Sigmoid colon (tissue), 7 donors: ENCODE measurements at regions of chr18 and their contacts with region 1.

Region 1: DNA sequence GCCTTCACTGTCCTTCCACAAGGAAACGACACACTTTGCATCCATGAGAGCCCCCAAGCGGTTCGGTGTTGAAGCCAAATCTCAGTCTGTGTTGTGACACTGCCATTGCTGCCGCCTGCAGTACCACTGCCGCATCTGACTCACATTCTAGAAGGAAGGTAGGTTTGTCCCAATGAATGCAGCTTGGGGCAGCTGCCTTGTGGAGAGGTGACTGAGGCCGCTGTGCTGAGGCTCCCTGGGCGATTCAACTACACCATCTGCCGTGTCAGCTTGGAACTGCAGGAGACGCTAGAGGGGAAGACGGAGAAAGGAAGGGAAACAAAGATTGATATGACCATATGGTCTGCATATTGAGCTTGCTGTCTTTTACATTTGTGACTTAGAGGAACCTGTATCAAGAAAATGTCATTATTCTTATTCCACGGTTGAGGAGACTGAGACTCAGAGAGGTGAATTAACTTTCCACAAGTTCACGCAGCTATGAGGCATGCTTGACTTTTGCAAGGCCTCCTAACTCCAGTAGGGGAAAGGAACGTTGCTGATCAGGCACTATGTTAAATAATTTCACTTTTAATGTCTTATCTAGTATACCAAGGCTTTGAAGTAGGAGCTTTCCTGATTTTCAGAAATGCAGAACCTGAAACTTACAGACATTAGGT is 43.5 kb upstream of the LMAN1 start:
- DNase-seq: peak; percentile 77
- H3K4me3 ChIP-seq: no peak overlapping the region
- H3K27ac ChIP-seq: no peak overlapping the region
- H3K4me1 ChIP-seq: no peaks in the 10 kb centered on the region
- H3K27me3 ChIP-seq: no peaks in the 10 kb centered on the region
- CTCF ChIP-seq: peak; percentile 55 to 82 (median 71)
- EP300 ChIP-seq: no peak
- POLR2A ChIP-seq: no peak

Region 2: DNA sequence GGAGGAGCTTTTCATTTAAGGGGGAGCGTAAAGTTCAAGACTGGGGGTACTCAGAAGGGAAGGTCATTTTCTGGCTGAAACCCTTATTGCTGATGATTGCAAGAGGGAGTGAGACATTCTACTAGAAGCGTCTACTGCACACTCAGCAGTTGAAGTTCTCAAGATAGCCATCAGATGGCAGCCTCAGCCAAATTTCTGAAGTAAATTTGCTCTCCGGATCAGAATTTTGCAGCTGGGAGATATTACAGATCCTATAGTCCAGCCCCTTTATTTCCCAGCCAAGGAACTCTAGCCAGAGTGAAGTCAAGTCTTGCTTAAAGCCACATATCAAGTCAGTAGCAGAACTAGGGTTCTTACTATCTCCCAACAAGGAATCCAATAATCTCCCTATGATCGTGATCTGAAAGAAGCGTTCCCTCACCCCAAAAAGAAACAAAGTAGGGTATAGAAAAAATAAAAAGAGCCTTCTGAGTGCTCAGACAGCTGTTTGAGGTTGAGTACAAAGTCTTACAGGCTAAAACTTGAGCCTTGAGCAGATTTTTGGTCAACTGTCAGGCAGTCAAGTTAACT is 153.3 kb before region 1 on chr18:
- intact Hi-C with region 1: loop called (anchors 5 kb)
- DNase-seq: no peak
- H3K4me3 ChIP-seq: no peak overlapping the region
- H3K27ac ChIP-seq: no peak overlapping the region
- H3K4me1 ChIP-seq: peaks cover 0 to 3% (median 0%) of the 10 kb centered on the region in 4 donors
- H3K27me3 ChIP-seq: peaks cover 0 to 15% (median 0%) of the 10 kb centered on the region in 3 donors
- CTCF ChIP-seq: peak in 3 of 4 experiments; percentile 52 to 62 (median 59)
- EP300 ChIP-seq: no peak
- POLR2A ChIP-seq: no peak

Region 3: DNA sequence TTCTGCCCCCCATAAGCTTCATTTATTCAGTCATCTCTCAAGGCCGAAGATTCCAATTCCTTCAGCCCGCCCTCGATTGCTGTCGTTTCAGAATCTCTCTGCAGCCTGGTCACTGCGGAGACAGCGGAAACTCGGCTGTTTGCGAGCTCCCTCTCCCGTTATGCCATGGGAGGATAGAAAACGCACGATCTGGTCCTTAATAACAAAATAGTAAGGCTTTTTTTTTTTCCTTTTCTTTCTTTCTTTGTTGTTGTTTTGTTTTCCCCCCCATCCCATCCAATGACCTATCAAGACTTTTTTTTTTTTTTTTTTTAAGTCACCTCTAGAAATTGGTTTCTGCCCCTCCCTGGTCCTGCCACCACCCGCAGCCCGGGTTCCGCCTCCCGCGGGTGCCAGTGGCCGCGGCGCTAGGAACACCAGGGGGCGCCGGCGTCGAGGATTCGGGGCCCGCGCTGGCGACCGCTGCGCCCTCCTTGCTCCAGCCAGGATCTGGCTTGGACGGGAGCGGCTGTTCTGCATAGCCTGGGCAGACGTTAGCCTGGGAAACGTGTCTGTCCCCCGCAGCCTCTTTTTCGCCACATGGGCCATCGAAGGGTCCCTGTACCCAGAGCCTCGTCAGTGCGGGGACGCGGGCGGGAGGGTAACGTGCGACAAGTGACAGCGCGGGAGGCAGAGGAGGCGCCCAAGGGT is 94.2 kb before region 1 on chr18:
- intact Hi-C with region 1: loop called (anchors 2 kb)
- DNase-seq: peak; percentile 83
- H3K4me3 ChIP-seq: peak overlapping the region in 3 of 4 donors; percentile 23 to 32 (median 27)
- H3K27ac ChIP-seq: no peak overlapping the region
- H3K4me1 ChIP-seq: peaks cover 0 to 10% (median 9%) of the 10 kb centered on the region in 4 donors
- H3K27me3 ChIP-seq: peaks cover 0 to 30% (median 0%) of the 10 kb centered on the region in 3 donors
- CTCF ChIP-seq: peak; percentile 43 to 75 (median 61)
- EP300 ChIP-seq: no peak
- POLR2A ChIP-seq: no peak